Breast epithelium (tissue), 4 donors: ENCODE measurements at regions of chr12 and their contacts with region 1.

Region 1: GRCh38 chr12:92224685-92225331 is 79.2 kb upstream of the BTG1 start:
- DNase-seq: no peak
- H3K4me3 ChIP-seq: no peak overlapping the region
- H3K27ac ChIP-seq: no peak overlapping the region
- H3K4me1 ChIP-seq: no peaks in the 10 kb centered on the region
- H3K27me3 ChIP-seq: no peaks in the 10 kb centered on the region
- CTCF ChIP-seq: no peak
- POLR2A ChIP-seq: no peak

Region 2: DNA sequence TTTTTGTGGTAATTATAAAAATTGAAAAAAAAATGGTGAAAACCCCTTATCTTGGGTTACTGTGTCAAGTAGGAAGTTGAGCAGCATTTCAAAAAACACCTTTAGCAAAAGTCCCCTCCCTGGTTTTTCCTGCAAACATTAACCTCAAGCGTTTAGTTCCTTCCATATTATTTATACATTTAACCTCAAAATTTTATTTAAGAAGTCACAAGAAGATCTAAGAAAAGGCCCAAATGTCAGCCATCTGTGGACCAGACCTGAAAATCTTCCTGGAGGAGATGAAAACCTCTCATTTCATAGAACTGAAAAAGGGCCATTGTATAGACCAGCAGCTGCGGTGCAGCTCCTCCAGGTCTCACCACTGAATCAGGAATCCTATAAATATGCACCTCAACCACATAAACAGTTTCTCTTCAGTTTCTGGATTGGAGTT is 38.8 kb before region 1 on chr12:
- intact Hi-C with region 1: loop called (anchors 2 kb)
- DNase-seq: no peak
- H3K4me3 ChIP-seq: no peak overlapping the region
- H3K27ac ChIP-seq: no peak overlapping the region
- H3K4me1 ChIP-seq: no peaks in the 10 kb centered on the region
- H3K27me3 ChIP-seq: no peaks in the 10 kb centered on the region
- CTCF ChIP-seq: no peak
- POLR2A ChIP-seq: no peak